ENCODE measurements at regions of chr17 and their contacts with region 1.

Region 1: GRCh38 chr17:78272181-78272913 is 40.9 kb downstream of the TMEM235 start:
- DNase-seq: peak; percentile 50
- H3K4me3 Mint-ChIP-seq: no peak overlapping the region
- H3K27ac Mint-ChIP-seq: peak overlapping the region; percentile 48
- H3K4me1 Mint-ChIP-seq: peaks cover 37% of the 10 kb centered on the region
- H3K27me3 Mint-ChIP-seq: peaks cover 3% of the 10 kb centered on the region

Region 2: DNA sequence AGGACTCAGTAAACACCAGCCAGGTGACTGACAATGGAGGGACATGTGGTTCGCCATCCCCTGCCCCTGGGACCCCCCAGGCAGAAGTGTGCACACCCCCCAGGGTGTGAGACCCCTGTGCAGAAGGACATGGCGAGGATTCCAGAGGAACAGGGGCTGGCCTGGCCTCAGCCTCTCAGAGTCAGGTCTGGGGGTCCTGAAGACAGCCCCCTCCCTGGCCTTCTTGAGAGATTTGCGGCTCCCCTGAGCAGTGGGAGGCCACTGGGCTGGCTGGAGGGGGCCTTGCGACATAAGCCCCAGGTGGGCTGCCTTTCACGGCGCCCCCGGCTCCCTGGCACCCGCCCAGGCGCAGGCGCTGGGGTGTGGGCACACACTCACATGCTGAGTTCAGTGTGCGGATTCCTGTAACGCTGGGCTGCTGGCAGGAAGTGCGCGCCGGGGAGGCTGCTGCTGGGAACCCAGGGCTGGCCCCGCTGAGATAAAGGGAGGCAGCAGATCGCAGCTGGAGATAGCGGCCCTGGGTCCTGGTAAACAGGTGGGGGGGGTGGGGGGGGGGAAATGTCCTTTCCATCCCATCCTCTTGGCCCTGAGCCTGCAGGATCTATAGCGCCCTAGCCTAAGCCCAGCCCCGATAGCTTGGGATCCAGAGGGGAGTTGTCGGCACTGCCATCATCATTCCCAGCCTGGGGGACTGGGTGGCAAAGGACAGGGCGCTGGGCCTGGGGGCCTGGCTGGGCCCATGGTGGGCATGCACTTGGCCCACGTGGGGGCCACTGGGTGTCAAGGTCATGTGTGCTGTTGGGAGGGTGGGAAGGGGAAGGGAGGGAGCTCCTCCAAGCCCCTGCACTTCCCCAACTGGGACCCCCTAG is 13.8 kb before region 1 on chr17:
- intact Hi-C with region 1: loop called (anchors 2 kb)
- DNase-seq: peak; percentile 76
- H3K4me3 Mint-ChIP-seq: peak overlapping the region; percentile 80
- H3K27ac Mint-ChIP-seq: peak overlapping the region; percentile 95
- H3K4me1 Mint-ChIP-seq: peaks cover 75% of the 10 kb centered on the region
- H3K27me3 Mint-ChIP-seq: no peaks in the 10 kb centered on the region

Region 3: GRCh38 chr17:78412403-78412802 is 140.1 kb after region 1 on chr17:
- intact Hi-C with region 1: no loop called
- DNase-seq: peak; percentile 49
- H3K4me3 Mint-ChIP-seq: peak overlapping the region; percentile 84
- H3K27ac Mint-ChIP-seq: peak overlapping the region; percentile 97
- H3K4me1 Mint-ChIP-seq: peaks cover 92% of the 10 kb centered on the region
- H3K27me3 Mint-ChIP-seq: no peaks in the 10 kb centered on the region

Measured in activated T-helper 1 cell treated with anti-CD3 and anti-CD28 coated beads, Interleukin-12 subunit alpha, Interleukin-12 subunit beta, Interleukin-2, Interleukin-4 antibody, amounts not matched to agents 30 ng/mL and 10 ng/mL and 1 ng/mL, durations not matched to agents 14 hours and 24 hours and 36 hours (primary cell).